SK-N-SH (cell line): ENCODE measurements at regions of chr17 and their contacts with region 1.

Region 1: DNA sequence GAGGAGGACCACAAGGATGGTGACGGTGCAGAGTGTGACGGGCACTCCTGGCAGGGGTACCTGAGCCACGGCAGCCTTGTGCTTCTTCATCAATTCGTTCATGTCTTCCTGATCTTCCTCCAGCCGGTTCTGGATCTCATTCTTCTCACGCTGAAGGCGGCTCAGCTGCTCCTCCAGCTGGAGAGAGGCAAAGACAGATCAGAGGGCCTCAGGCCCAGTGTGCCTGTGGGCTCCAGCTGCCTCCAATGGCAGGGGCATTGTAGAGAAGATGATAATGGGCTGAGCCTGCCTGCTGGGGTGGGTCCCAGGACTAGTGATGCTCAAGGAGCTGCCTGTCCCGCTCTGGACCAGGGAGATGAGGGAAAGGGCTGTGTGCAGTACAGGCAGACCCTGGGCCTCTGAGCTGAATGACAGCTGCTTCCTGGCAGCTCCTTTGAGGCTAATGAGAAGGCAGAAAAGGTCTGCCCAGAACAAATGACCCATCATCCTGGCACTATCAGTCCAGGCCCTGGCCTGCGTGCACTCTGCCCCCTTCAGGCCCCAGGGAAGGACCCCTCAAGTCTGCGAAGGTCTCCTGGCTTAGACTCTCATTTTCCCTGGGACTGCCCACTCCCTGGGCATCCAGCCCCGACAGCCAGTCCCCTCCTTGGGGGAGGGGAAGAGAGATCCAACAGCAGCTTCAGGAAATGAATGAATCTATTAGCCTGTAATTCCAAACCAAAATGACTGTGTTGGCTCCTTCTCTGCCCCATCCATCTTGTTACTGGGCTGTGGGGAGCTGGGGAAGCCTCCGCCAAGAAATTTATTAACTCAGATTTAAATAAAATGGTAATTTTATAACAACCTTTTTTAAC is 48.0 kb downstream of the PIPOX start:
- DNase-seq: peak; percentile 56
- H3K4me3 ChIP-seq: no peak overlapping the region
- H3K27ac ChIP-seq: peak overlapping the region in 1 of 2 experiments; percentile 53; a peak in 2 of 4 replicates
- H3K4me1 ChIP-seq: peaks cover 0 to 21% of the 10 kb centered on the region in 2 experiments; a peak in 3 of 4 replicates
- H3K27me3 ChIP-seq: no peaks in the 10 kb centered on the region
- CTCF ChIP-seq: no peak
- EP300 ChIP-seq: no peak
- RAD21 ChIP-seq: no peak; the same call in 1 of the 2 replicates

Region 2: DNA sequence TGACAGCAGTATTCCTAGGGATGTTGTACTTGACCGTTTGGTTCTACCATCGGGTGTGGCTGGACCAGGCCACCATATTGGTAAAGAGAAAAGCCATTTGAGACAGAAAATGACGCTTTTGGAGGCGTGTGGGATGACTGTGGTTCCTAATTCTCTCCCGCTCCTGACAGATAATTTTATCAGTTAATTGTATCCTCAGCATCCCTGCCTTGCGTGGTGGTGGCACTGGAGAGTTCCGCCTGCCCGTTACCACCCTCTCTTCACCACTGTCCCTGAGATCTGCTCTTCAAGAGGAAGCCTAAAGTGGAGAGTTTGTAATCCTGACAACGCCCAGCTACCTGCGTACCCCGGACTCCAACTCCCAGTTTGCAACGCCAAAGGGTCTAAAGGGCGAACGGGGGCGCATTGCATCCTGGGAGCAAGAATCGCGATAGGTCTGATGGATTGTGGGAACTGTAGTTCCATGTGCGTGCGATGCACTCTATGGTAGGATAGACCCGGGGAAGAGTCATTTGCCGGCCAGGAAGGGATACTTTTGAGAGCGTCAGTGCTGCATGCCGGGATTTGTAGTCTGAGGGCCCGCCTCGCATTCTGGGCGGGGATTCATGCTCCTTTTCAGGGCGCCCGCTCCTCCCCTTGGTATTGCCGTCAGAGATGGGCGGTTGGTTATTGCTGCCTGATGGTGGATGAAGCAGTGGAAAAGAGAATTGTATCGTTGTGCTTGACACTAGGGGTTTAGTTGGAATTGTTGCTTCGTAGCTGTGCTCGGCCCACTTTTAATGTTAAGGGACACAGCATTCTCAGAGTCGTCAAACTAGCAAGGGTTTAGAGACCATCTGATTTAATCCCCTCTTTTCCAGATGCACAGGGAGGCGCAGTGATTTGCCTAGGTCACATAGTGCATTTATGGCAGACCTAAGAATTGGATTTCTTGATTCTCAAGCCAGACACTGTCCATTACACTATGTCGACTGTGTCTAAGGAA is 138.7 kb before region 1 on chr17:
- CTCF ChIA-PET with region 1: interaction called, 10 read pairs
- POLR2A ChIA-PET with region 1: interaction called, 3 read pairs
- DNase-seq: peak; percentile 88
- H3K4me3 ChIP-seq: peak overlapping the region; percentile 80 to 81
- H3K27ac ChIP-seq: peak overlapping the region; percentile 99 to 100
- H3K4me1 ChIP-seq: peaks cover 14 to 24% of the 10 kb centered on the region in 2 experiments
- H3K27me3 ChIP-seq: no peaks in the 10 kb centered on the region
- CTCF ChIP-seq: no peak
- EP300 ChIP-seq: no peak
- RAD21 ChIP-seq: no peak

Region 3: DNA sequence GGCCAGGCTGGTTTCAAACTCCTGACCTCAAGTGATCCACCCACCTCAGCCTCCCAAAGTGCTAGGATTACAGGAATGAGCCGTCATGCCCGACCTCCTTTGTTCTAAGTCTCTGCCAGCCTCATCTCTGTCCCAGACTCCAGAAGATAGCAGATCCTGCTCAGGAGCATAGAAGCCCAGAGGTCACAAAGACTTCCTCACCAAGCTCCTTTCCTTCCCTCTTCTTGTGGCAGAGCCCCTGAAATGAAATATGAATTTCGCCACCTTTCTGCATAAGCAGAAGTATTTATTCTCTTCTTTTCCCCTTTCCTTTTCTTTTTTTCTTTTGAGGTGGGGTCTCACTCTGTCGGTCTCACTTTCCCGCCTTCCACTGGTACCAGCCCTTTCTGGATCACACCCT is 59.5 kb before region 1 on chr17:
- CTCF ChIA-PET with region 1: no interaction called
- POLR2A ChIA-PET with region 1: no interaction called
- DNase-seq: no peak
- H3K4me3 ChIP-seq: no peak overlapping the region
- H3K27ac ChIP-seq: no peak overlapping the region
- H3K4me1 ChIP-seq: no peaks in the 10 kb centered on the region
- H3K27me3 ChIP-seq: peaks cover 33% of the 10 kb centered on the region; the same call in 1 of the 2 replicates
- CTCF ChIP-seq: no peak
- EP300 ChIP-seq: no peak
- RAD21 ChIP-seq: no peak